Motor neuron (in vitro differentiated cells): ENCODE measurements at regions of chr7 and their contacts with region 1.

Region 1: GRCh38 chr7:74379938-74380337 is 73.8 kb upstream of the GTF2IRD1 start:
- ATAC-seq: no peak
- H3K4me3 ChIP-seq: no peak overlapping the region
- H3K27ac ChIP-seq: no peak overlapping the region
- H3K4me1 ChIP-seq: no peaks in the 10 kb centered on the region

Region 2: GRCh38 chr7:74061840-74062539 is 317.9 kb before region 1 on chr7:
- in situ Hi-C with region 1: loop called in 1 of 9 experiments (anchors 25 kb)
- ATAC-seq: peak; percentile 63 to 99 (median 88)
- H3K4me3 ChIP-seq: no peak overlapping the region
- H3K27ac ChIP-seq: no peak overlapping the region
- H3K4me1 ChIP-seq: no peaks in the 10 kb centered on the region

Region 3: DNA sequence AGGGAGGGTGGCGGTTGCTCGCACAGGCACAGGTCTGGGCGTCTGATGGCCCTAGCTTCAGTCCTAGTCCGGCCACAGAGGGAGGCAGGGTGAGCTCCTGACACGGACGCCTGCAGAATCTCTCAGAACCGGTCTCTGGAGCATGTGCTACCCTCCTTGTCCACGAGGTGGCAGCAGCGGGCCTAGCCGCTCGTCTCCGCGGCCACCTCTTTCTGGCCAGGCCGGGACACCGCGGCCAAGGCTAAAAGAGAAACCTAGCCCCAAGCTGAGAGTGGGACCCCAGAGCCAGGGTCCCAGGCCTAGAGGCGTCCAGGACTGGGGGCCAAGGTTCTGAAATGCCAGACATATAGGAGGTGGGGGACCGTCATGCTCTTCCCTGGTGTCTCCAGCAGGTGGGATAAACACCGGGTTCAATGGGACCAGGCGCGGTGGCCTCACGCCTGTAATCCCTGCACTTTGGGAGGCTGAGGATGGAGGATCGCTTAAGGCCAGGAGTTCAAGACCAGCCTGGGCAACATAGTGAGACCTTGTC is 173.3 kb before region 1 on chr7:
- in situ Hi-C with region 1: loop called in 3 of 9 experiments (anchors 25 kb)
- ATAC-seq: peak; percentile 83 to 95 (median 85)
- H3K4me3 ChIP-seq: no peak overlapping the region
- H3K27ac ChIP-seq: no peak overlapping the region
- H3K4me1 ChIP-seq: no peaks in the 10 kb centered on the region

Region 4: DNA sequence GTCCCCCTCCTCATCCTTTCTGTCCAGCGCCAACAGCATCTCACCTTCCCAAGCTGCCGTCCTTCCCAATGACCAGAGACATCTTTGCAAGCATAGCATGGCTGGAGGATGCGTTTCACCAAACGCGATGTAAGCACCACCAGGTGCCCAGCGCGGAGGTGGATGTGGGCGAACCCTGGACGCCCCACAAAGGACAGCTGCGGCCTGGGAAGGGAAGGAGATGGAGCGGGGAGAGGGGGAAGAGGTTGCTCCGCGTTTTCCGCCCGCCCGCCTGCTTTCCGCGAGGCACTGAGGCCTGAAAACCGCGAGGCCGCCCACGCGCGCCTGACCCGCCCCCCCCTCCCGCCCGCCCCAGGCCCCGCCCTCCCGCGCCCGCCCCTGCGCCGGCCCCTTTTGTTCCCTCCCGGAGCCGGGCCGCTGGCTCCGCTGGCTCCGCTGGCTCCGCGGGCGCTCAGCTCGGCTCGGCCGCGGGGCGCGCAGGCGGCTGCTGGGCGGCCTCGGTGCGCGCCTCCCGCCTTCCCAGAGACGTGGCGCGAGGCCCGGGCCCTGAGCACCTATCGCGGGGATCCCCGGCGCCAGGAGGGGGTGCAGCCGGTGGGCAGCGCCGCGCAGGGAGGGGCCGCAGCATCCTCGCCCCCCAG is 90.8 kb before region 1 on chr7 and contains the start of gene CLIP2:
- in situ Hi-C with region 1: loop called in 1 of 9 experiments (anchors 25 kb)
- ATAC-seq: peak; percentile 78 to 94 (median 88)
- H3K4me3 ChIP-seq: peak within 1 kb of the TSS; percentile 52 to 100 (median 88)
- H3K27ac ChIP-seq: peak within 1 kb of the TSS; percentile 88 to 89
- H3K4me1 ChIP-seq: peaks cover 11 to 22% of the 10 kb centered on the region in 2 donors
- total RNA-seq, gene CLIP2: 11.3 to 51.8 (median 32.7) TPM